ENCODE measurements at regions of chr20 and their contacts with region 1.

Region 1: GRCh38 chr20:63009045-63009961 is 2.5 kb upstream of the BHLHE23 start:
- DNase-seq: peak; percentile 94
- H3K4me3 ChIP-seq: peak overlapping the region in 3 of 8 donors; percentile 11 to 60 (median 25)
- H3K27ac ChIP-seq: peak overlapping the region in 2 of 8 donors; percentile 16 to 36
- H3K4me1 ChIP-seq: peaks cover 18 to 61% (median 54%) of the 10 kb centered on the region in 6 donors
- H3K27me3 ChIP-seq: peaks cover 29 to 100% (median 87%) of the 10 kb centered on the region in 7 donors
- CTCF ChIP-seq: peak; percentile 80 to 97 (median 95)
- POLR2A ChIP-seq: no peak

Region 2: DNA sequence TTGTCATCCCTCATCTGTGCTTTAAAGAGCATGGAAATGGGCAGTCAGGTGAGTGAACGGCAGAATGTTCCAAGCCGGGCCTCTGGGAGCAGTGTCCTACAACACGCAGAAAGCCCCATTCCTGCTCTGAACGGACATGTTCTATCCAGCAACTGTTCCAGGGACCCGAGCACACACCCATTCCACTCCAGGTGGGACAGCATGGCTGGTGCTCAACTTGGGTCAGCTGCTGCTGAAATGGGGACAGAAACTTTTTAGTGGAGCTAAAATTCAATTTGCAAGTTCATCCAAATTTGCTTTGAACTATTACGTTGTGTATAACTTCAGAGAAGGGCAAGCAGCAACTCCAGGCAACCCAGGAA is 109.6 kb before region 1 on chr20:
- intact Hi-C with region 1: loop called (anchors 10 kb)
- DNase-seq: no peak
- H3K4me3 ChIP-seq: no peak overlapping the region
- H3K27ac ChIP-seq: peak overlapping the region in 2 of 8 donors; percentile 20 to 53
- H3K4me1 ChIP-seq: peaks cover 18 to 31% (median 25%) of the 10 kb centered on the region in 6 donors
- H3K27me3 ChIP-seq: no peaks in the 10 kb centered on the region
- CTCF ChIP-seq: no peak
- POLR2A ChIP-seq: no peak

Region 3: DNA sequence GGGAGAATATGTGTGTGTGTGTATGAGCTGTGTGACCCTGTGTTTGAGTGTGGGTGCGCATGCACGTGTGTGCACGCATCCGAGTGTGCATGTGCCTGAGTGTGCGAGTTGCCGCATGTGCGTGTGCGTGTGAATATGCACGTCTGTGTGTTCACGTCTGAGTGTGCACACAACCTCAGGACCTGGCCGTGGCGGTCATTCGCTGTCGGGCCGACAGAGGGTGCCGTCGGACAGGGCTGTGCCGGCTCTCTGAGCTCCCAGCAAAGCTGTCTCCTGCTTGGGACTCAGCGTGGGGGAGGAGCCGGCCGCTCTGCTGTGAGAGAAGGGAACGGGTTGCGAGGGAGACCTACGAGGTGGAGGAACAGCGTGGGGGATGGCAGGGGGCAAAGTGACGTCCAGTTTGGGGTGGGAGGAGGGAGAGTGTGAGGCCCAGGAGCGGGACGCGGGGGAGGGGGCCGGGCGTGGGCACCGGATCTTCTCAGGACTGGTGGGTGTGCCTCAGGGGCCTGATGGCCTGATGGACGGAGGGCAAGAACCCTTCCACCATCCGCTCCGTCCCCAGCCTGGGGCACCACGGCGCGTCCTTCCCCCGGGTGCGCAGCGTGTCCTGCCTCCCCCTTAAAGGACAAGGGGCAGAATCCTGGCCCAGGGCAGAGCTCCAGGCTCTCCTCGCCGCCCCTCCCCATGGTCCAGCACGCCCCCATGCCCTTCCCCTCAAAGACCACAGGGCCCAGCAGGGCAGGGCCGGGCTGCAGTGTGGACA is 36.9 kb before region 1 on chr20:
- intact Hi-C with region 1: loop called (anchors 2 kb)
- DNase-seq: peak; percentile 95
- H3K4me3 ChIP-seq: peak overlapping the region in 6 of 8 donors; percentile 16 to 62 (median 24)
- H3K27ac ChIP-seq: no peak overlapping the region
- H3K4me1 ChIP-seq: peaks cover 5 to 24% (median 18%) of the 10 kb centered on the region in 6 donors
- H3K27me3 ChIP-seq: peaks cover 0 to 78% (median 64%) of the 10 kb centered on the region in 7 donors
- CTCF ChIP-seq: peak; percentile 79 to 95 (median 88)
- POLR2A ChIP-seq: no peak

Region 4: GRCh38 chr20:63172720-63173119 is 163.4 kb after region 1 on chr20:
- intact Hi-C with region 1: no loop called
- DNase-seq: no peak
- H3K4me3 ChIP-seq: no peak overlapping the region
- H3K27ac ChIP-seq: no peak overlapping the region
- H3K4me1 ChIP-seq: peaks cover under 1 to 34% (median 30%) of the 10 kb centered on the region in 6 donors
- H3K27me3 ChIP-seq: peaks cover 9 to 90% (median 52%) of the 10 kb centered on the region in 7 donors
- CTCF ChIP-seq: no peak
- POLR2A ChIP-seq: no peak

Measured in spleen (tissue), 13 donors.